AG04450 (cell line): ENCODE measurements at regions of chr11 and their contacts with region 1.

Region 1: DNA sequence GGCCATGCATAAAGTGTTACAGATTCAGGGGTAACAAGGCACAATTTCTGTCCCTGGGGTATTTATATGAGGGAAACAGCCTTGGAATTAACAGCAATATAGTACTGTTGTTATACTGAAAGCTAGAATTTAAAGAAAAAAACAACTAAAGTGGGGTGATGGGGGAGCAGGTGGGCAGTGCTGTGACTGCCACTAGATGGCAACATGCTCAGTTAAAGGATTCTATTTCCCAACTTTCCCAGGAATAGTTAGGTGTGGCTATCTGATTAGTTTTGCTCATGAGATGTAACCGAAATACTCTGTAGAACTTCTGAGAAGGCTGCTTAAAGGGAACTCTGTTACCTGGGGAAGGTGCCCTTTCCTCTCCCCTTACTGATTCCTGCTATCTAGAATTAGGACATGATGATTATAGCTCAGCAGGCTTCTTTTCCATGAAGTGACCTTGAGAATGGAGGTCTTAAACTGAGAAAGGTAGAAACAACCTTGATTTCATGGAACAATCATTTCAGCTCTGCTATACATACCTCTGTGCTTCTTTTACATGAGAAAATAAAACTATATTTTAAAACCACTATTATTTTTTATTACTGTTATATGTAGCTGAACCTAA is 102.6 kb downstream of the RELT start:
- DNase-seq: no peak
- H3K4me3 ChIP-seq: no peak overlapping the region
- H3K27ac ChIP-seq: no peak overlapping the region
- H3K27me3 ChIP-seq: no peaks in the 10 kb centered on the region
- CTCF ChIP-seq: peak; percentile 94

Region 2: GRCh38 chr11:73429121-73429750 is 49.6 kb before region 1 on chr11:
- CTCF ChIA-PET with region 1: interaction called, 15 read pairs
- POLR2A ChIA-PET with region 1: interaction called, 3 read pairs
- DNase-seq: peak; percentile 37
- H3K4me3 ChIP-seq: no peak overlapping the region
- H3K27ac ChIP-seq: peak overlapping the region; percentile 86
- H3K27me3 ChIP-seq: no peaks in the 10 kb centered on the region
- CTCF ChIP-seq: no peak

Region 3: GRCh38 chr11:73458201-73458600 is 20.6 kb before region 1 on chr11:
- CTCF ChIA-PET with region 1: interaction called, 89 read pairs
- POLR2A ChIA-PET with region 1: interaction called, 6 read pairs
- DNase-seq: no peak
- H3K4me3 ChIP-seq: no peak overlapping the region
- H3K27ac ChIP-seq: no peak overlapping the region
- H3K27me3 ChIP-seq: no peaks in the 10 kb centered on the region
- CTCF ChIP-seq: no peak

Region 4: GRCh38 chr11:73493956-73494598 is 15.2 kb after region 1 on chr11:
- CTCF ChIA-PET with region 1: interaction called, 49 read pairs
- POLR2A ChIA-PET with region 1: no interaction called
- DNase-seq: peak; percentile 27
- H3K4me3 ChIP-seq: no peak overlapping the region
- H3K27ac ChIP-seq: no peak overlapping the region
- H3K27me3 ChIP-seq: no peaks in the 10 kb centered on the region
- CTCF ChIP-seq: no peak

Region 5: DNA sequence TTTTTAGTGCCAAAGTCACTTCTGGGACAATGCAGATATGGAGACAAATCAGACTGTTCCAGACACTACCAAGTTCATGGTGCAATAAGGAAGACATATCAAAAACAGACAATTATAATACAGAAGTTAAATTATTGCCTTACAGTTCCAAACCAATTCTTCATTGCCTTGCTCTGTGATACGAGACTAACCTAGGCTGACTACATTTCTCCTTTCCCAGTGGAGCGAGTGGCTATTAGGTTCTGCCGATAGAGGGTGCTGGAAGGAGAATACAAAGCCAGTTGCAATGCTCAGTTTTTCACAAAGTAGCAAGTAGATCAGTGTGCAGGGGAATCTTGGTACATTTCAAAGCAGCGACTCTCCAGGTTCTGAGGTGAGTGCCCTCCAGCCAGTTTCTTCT is 51.3 kb after region 1 on chr11:
- CTCF ChIA-PET with region 1: interaction called, 20 read pairs
- POLR2A ChIA-PET with region 1: no interaction called
- DNase-seq: no peak
- H3K4me3 ChIP-seq: no peak overlapping the region
- H3K27ac ChIP-seq: no peak overlapping the region
- H3K27me3 ChIP-seq: no peaks in the 10 kb centered on the region
- CTCF ChIP-seq: peak; percentile 29; the same call in 1 of the 2 replicates